ENCODE measurements at regions of chr2 and their contacts with region 1.

Region 1: GRCh38 chr2:30711646-30712085 is 95.6 kb downstream of the CAPN13 start:
- DNase-seq: peak; percentile 57
- ATAC-seq: peak; percentile 98
- H3K4me3 Mint-ChIP-seq: no peak overlapping the region
- H3K27ac Mint-ChIP-seq: no peak overlapping the region
- H3K4me1 Mint-ChIP-seq: peaks cover 11% of the 10 kb centered on the region
- H3K27me3 Mint-ChIP-seq: no peaks in the 10 kb centered on the region
- CTCF ChIP-seq: peak; percentile 79

Region 2: GRCh38 chr2:30146438-30147147 is 565.1 kb before region 1 on chr2 and contains the start of gene YPEL5:
- CTCF ChIA-PET with region 1: interaction called, 32 read pairs
- POLR2A ChIA-PET with region 1: interaction called, 7 read pairs
- intact Hi-C with region 1: no loop called
- DNase-seq: peak; percentile 98
- ATAC-seq: peak; percentile 85
- H3K4me3 Mint-ChIP-seq: peak within 1 kb of the TSS; percentile 86
- H3K27ac Mint-ChIP-seq: peak within 1 kb of the TSS; percentile 99
- H3K4me1 Mint-ChIP-seq: peaks cover 50% of the 10 kb centered on the region
- H3K27me3 Mint-ChIP-seq: no peaks in the 10 kb centered on the region
- CTCF ChIP-seq: no peak
- total RNA-seq, gene YPEL5: 56.7 and 57.4 TPM in 2 replicates

Region 3: GRCh38 chr2:30208452-30208851 is 503.2 kb before region 1 on chr2:
- CTCF ChIA-PET with region 1: interaction called, 275 read pairs
- POLR2A ChIA-PET with region 1: interaction called, 4 read pairs
- intact Hi-C with region 1: loop called (anchors 1 kb)
- DNase-seq: no peak
- ATAC-seq: peak; percentile 62
- H3K4me3 Mint-ChIP-seq: no peak overlapping the region
- H3K27ac Mint-ChIP-seq: peak overlapping the region; percentile 20
- H3K4me1 Mint-ChIP-seq: peaks cover 18% of the 10 kb centered on the region
- H3K27me3 Mint-ChIP-seq: no peaks in the 10 kb centered on the region
- CTCF ChIP-seq: peak; percentile 82

Region 4: GRCh38 chr2:30475542-30475941 is 236.1 kb before region 1 on chr2:
- CTCF ChIA-PET with region 1: interaction called, 7 read pairs
- POLR2A ChIA-PET with region 1: no interaction called
- intact Hi-C with region 1: loop called (anchors 5 kb)
- DNase-seq: no peak
- ATAC-seq: no peak
- H3K4me3 Mint-ChIP-seq: no peak overlapping the region
- H3K27ac Mint-ChIP-seq: no peak overlapping the region
- H3K4me1 Mint-ChIP-seq: peaks cover 37% of the 10 kb centered on the region
- H3K27me3 Mint-ChIP-seq: no peaks in the 10 kb centered on the region
- CTCF ChIP-seq: no peak

Region 5: GRCh38 chr2:31138037-31138962 is 426.6 kb after region 1 on chr2 and contains the start of gene GALNT14:
- CTCF ChIA-PET with region 1: interaction called, 5 read pairs
- POLR2A ChIA-PET with region 1: interaction called, 3 read pairs
- intact Hi-C with region 1: loop called (anchors 1 kb)
- DNase-seq: peak; percentile 64
- ATAC-seq: peak; percentile 76
- H3K4me3 Mint-ChIP-seq: peak within 1 kb of the TSS; percentile 85
- H3K27ac Mint-ChIP-seq: no peak within 1 kb of the TSS
- H3K4me1 Mint-ChIP-seq: peaks cover 8% of the 10 kb centered on the region
- H3K27me3 Mint-ChIP-seq: peaks cover 5% of the 10 kb centered on the region
- CTCF ChIP-seq: no peak
- total RNA-seq, gene GALNT14: 6.6 and 7.9 TPM in 2 replicates

Region 6: GRCh38 chr2:31255911-31256571 is 544.4 kb after region 1 on chr2:
- CTCF ChIA-PET with region 1: interaction called, 7 read pairs
- POLR2A ChIA-PET with region 1: interaction called, 4 read pairs
- intact Hi-C with region 1: loop called (anchors 5 kb)
- DNase-seq: peak; percentile 58
- ATAC-seq: peak; percentile 70
- H3K4me3 Mint-ChIP-seq: peak overlapping the region; percentile 72
- H3K27ac Mint-ChIP-seq: peak overlapping the region; percentile 84
- H3K4me1 Mint-ChIP-seq: peaks cover 85% of the 10 kb centered on the region
- H3K27me3 Mint-ChIP-seq: no peaks in the 10 kb centered on the region
- CTCF ChIP-seq: no peak

Region 7: DNA sequence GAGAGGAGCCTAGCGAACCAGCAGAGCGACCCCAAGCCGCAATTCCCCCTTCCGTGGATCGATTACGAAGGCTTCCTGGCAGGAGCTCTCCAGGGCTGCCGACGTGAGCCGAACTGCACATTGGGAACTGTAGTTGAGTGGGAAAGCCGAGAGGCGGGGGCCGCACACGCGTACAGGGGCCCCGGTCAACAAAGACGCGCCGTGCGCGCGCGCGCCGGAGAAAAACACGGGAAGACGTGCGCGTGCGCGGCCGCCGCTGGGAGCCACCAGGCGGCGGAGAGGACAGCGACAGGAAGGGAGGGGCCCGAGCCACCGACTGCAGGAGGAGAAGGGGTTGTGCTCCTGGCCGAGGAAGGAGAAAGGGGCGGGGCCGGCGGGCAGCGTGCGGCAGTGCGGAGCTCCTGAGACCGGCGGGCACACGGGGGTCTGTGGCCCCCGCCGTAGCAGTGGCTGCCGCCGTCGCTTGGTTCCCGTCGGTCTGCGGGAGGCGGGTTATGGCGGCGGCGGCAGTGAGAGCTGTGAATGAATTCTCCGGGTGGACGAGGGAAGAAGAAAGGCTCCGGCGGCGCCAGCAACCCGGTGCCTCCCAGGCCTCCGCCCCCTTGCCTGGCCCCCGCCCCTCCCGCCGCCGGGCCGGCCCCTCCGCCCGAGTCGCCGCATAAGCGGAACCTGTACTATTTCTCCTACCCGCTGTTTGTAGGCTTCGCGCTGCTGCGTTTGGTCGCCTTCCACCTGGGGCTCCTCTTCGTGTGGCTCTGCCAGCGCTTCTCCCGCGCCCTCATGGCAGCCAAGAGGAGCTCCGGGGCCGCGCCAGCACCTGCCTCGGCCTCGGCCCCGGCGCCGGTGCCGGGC is 1351.9 kb after region 1 on chr2 and contains the start of gene SPAST:
- CTCF ChIA-PET with region 1: no interaction called
- POLR2A ChIA-PET with region 1: no interaction called
- intact Hi-C with region 1: loop called (anchors 2 kb)
- DNase-seq: peak; percentile 96
- ATAC-seq: peak; percentile 93
- H3K4me3 Mint-ChIP-seq: peak within 1 kb of the TSS; percentile 97
- H3K27ac Mint-ChIP-seq: peak within 1 kb of the TSS; percentile 93
- H3K4me1 Mint-ChIP-seq: peaks cover 30% of the 10 kb centered on the region
- H3K27me3 Mint-ChIP-seq: no peaks in the 10 kb centered on the region
- CTCF ChIP-seq: no peak
- total RNA-seq, gene SPAST: 17.6 and 20.8 TPM in 2 replicates